OCI-LY7 (cell line): ENCODE measurements at regions of chr2 and their contacts with region 1.

Region 1: DNA sequence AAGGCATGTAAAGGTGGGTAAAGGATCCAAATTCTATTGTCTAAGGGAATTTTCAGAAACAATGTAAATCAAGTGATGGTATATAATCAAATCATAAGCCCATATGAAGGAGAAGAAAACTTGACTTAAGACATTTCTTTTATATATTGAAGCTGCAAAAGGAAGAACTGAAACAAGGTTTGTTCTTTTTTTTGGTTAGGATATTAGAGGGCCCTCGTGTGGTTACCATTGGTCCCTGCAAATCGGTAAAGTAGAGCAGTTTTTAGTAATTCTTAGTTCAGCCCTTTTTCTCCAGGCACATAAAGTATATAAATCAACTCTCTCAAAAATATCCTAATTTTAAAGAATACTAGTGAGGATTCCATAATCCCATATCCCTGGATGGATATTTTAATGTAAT is 105.6 kb upstream of the STK17B start:
- DNase-seq: peak; percentile 81
- H3K4me3 ChIP-seq: peak overlapping the region; percentile 56
- H3K27ac ChIP-seq: peak overlapping the region; percentile 100
- H3K4me1 ChIP-seq: peaks cover 49% of the 10 kb centered on the region
- CTCF ChIP-seq: peak; percentile 97

Region 2: DNA sequence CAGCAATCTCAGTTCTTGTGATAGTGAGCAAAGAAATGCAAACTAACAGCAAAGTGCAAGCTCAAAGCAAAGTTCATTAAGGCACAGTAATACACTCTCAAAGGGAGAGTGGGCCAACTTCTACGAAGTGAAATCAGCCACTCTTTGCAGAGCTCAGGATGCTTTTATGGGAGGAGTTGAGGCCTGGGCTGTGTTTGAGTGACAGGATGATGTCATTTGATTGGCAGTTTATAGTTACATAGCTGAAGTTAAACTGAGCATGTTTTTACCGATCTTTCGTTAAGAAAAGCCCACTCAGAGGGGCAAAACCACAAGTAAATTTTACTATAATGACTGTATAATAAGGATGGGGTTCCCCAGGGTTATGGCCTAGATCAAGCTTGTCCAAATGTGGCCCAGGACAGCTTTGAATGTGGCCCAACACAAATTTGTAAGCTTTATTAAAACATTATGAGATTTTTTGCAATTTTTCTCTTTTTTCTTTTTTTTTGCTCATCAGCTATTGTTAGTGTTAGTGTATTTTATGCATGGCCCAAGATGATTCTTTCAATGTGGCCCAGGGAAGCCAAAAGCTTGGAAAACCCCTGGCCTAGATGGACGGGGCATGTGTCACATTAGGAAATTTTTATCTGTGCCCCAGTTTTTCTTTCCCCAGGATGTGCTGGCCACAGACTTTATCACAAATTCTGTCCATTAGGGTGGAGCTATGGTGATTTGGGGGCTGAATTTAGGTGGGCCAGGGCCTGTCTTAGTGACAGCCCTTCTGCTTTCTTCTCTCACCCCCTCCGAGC is 200.0 kb before region 1 on chr2:
- CTCF ChIA-PET with region 1: no interaction called
- POLR2A ChIA-PET with region 1: interaction called, 5 read pairs
- intact Hi-C with region 1: loop called (anchors 1 kb)
- DNase-seq: no peak
- H3K4me3 ChIP-seq: no peak overlapping the region
- H3K27ac ChIP-seq: no peak overlapping the region
- H3K4me1 ChIP-seq: peaks cover 5% of the 10 kb centered on the region
- CTCF ChIP-seq: no peak

Region 3: GRCh38 chr2:196205881-196206435 is 71.0 kb before region 1 on chr2:
- CTCF ChIA-PET with region 1: no interaction called
- POLR2A ChIA-PET with region 1: interaction called, 4 read pairs
- intact Hi-C with region 1: loop called (anchors 1 kb)
- DNase-seq: no peak
- H3K4me3 ChIP-seq: no peak overlapping the region
- H3K27ac ChIP-seq: no peak overlapping the region
- H3K4me1 ChIP-seq: peaks cover 55% of the 10 kb centered on the region
- CTCF ChIP-seq: no peak

Region 4: DNA sequence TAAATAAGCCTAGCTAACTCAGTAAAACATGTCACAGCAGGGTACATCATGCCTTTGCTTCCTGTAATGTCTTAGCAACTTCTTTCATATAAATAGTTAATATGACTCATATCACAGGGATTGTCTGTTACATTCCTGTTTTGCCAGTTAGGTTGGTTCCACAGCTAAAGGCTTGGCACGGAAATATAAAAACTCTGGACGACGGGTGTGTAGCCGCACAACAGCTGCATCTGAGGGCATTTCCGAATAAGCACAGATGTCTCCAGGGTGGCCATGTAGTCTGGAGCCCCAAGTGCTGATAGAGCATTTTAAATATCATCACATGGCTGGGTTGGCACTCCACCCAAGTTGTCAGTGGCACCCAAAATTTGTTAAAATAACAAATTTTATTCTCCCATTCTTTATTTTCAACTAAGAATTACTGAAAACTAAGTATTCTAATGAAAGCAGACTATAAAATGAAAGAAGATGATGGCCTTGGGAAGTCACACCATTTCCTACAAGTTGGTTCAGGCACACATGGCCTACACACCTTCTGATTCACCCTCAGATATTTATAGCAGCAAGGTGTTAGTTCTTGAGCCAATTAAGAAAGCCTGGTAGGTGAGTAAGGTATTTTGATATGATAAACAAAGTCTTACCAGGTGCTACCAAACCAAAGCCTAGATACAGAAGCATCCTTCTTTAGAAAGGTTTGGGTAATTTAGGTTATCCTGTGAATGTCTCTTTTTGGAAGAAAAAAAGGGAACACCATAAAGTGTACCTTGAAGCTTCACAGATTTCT is 43.8 kb before region 1 on chr2:
- CTCF ChIA-PET with region 1: interaction called, 5 read pairs
- POLR2A ChIA-PET with region 1: interaction called, 59 read pairs
- intact Hi-C with region 1: no loop called
- DNase-seq: peak; percentile 45
- H3K4me3 ChIP-seq: peak overlapping the region; percentile 9
- H3K27ac ChIP-seq: peak overlapping the region; percentile 79
- H3K4me1 ChIP-seq: peaks cover 54% of the 10 kb centered on the region
- CTCF ChIP-seq: no peak

Region 5: GRCh38 chr2:196263181-196263747 is 13.7 kb before region 1 on chr2:
- CTCF ChIA-PET with region 1: interaction called, 3 read pairs
- POLR2A ChIA-PET with region 1: interaction called, 27 read pairs
- intact Hi-C with region 1: no loop called
- DNase-seq: peak; percentile 72
- H3K4me3 ChIP-seq: peak overlapping the region; percentile 39
- H3K27ac ChIP-seq: peak overlapping the region; percentile 65
- H3K4me1 ChIP-seq: peaks cover 70% of the 10 kb centered on the region
- CTCF ChIP-seq: no peak